B cell (primary cell): ENCODE measurements at regions of chr1 and their contacts with region 1.

Region 1: DNA sequence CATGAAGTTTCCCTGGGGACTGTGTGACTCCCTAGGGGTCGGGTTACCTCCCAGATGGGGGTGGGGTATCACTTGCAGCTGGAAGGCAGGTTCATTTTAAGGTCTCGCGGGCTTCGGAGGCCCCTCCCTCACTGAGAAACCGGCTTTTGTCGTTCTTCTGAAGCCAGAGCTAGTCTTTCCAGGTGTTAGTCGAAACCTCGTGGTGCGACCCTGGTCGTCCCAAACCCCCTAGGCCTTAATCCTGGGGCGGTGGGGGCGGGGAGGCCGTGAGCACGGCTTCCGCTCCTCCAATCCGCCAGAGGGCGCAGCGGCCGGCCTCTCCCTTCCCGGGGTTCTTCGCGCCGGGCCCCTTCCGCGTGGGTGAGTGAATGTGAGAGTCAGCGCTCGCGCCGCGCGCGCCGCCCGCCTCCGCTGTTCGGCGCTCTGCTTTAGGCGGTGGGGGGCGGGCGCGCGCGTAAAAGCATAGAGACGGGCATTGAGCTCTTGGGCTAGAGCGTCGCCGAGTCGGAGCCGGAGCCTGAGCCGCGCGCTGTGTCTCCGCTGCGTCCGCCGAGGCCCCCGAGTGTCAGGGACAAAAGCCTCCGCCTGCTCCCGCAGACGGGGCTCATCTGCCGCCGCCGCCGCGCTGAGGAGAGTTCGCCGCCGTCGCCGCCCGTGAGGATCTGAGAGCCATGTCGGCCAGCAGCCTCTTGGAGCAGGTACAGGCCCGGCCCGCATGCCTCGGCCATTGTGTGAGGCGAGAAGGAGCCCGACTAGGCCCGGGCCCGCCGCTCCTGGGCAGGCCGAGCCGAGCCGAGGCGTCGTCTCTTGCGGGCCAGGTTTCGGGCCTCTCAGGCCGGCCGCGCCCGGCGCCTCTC is at the start of gene YTHDF2:
- DNase-seq: peak; percentile 99
- ATAC-seq: peak; percentile 91
- H3K4me3 ChIP-seq: peak within 1 kb of the TSS; percentile 75 to 91 (median 84)
- H3K4me3 Mint-ChIP-seq: peak within 1 kb of the TSS; percentile 95
- H3K27ac ChIP-seq: peak within 1 kb of the TSS; percentile 92 to 94
- H3K27ac Mint-ChIP-seq: peak within 1 kb of the TSS; percentile 95
- H3K4me1 ChIP-seq: peaks cover 16 to 23% of the 10 kb centered on the region in 2 donors
- H3K4me1 Mint-ChIP-seq: peaks cover 39% of the 10 kb centered on the region
- H3K27me3 ChIP-seq: no peaks in the 10 kb centered on the region
- H3K27me3 Mint-ChIP-seq: no peaks in the 10 kb centered on the region
- CTCF ChIP-seq: peak; percentile 91
- total RNA-seq, gene YTHDF2: 58.8 and 73.0 TPM in 2 replicates

Region 2: DNA sequence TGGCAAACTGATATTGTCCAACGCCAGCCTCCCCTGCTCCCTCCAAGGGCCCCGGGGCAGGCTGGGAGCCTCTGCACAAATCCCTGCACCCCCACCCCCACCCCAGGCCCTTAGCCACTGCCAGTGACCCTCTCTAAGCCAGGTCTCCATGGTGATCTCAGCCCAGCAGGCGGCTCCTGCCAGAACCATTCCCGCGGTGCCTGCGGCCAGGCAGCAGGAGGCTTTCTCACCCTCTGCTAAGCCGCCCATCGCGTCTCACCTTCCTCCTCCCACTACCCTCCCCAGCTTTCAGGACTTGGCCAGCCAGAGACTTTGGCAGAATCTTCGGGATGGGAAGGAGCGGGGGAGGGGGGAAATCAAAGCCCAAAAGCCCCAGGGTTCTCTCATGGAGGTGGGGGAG is 1199.9 kb before region 1 on chr1:
- CTCF ChIA-PET with region 1: no interaction called
- POLR2A ChIA-PET with region 1: no interaction called
- intact Hi-C with region 1: no loop called
- DNase-seq: no peak
- ATAC-seq: no peak
- H3K4me3 ChIP-seq: no peak overlapping the region
- H3K4me3 Mint-ChIP-seq: no peak overlapping the region
- H3K27ac ChIP-seq: no peak overlapping the region
- H3K27ac Mint-ChIP-seq: no peak overlapping the region
- H3K4me1 ChIP-seq: no peaks in the 10 kb centered on the region
- H3K4me1 Mint-ChIP-seq: no peaks in the 10 kb centered on the region
- H3K27me3 ChIP-seq: no peaks in the 10 kb centered on the region
- H3K27me3 Mint-ChIP-seq: no peaks in the 10 kb centered on the region
- CTCF ChIP-seq: no peak

Region 3: DNA sequence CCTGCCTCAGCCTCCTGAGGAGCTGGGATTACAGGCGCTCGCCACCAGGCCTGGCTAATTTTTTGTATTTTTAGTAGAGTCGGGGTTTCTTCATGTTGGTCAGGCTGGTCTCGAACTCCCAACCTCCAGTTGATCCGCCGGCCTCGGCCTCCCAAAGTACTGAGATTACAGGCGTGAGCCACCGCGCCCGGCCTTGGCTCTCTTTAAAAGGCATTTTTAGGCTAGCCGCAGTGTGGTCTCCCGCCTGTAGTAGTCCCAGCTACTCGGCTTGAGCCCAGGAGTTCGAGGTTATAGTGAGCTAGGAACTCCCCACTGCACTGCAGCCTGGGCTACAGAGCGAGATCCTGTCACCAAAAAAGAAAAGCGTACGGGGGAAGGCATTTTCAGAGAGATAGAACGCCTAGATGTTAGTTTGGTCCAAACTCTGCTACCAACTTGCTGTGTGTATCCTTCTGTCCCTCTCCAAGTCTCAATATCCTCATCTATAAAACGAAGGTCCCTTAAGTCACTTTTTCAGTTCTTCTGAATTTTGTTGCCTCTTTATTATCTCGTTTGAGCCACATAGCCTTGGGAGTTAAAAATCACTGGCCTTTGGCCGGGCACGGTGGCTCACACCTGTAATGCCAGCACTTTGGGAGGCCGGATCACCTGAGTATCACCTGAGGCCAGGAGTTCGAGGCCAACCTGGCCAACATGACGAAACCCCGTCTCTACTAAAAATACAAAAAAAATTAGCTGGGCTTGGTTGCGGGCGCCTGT is 407.1 kb before region 1 on chr1:
- CTCF ChIA-PET with region 1: no interaction called
- POLR2A ChIA-PET with region 1: interaction called, 5 read pairs
- intact Hi-C with region 1: loop called (anchors 5 kb)
- DNase-seq: peak; percentile 67
- ATAC-seq: no peak
- H3K4me3 ChIP-seq: peak overlapping the region; percentile 72 to 93 (median 80)
- H3K4me3 Mint-ChIP-seq: peak overlapping the region; percentile 91
- H3K27ac ChIP-seq: peak overlapping the region; percentile 91 to 99
- H3K27ac Mint-ChIP-seq: peak overlapping the region; percentile 99
- H3K4me1 ChIP-seq: peaks cover 34 to 41% of the 10 kb centered on the region in 2 donors
- H3K4me1 Mint-ChIP-seq: peaks cover 45% of the 10 kb centered on the region
- H3K27me3 ChIP-seq: no peaks in the 10 kb centered on the region
- H3K27me3 Mint-ChIP-seq: no peaks in the 10 kb centered on the region
- CTCF ChIP-seq: no peak

Region 4: DNA sequence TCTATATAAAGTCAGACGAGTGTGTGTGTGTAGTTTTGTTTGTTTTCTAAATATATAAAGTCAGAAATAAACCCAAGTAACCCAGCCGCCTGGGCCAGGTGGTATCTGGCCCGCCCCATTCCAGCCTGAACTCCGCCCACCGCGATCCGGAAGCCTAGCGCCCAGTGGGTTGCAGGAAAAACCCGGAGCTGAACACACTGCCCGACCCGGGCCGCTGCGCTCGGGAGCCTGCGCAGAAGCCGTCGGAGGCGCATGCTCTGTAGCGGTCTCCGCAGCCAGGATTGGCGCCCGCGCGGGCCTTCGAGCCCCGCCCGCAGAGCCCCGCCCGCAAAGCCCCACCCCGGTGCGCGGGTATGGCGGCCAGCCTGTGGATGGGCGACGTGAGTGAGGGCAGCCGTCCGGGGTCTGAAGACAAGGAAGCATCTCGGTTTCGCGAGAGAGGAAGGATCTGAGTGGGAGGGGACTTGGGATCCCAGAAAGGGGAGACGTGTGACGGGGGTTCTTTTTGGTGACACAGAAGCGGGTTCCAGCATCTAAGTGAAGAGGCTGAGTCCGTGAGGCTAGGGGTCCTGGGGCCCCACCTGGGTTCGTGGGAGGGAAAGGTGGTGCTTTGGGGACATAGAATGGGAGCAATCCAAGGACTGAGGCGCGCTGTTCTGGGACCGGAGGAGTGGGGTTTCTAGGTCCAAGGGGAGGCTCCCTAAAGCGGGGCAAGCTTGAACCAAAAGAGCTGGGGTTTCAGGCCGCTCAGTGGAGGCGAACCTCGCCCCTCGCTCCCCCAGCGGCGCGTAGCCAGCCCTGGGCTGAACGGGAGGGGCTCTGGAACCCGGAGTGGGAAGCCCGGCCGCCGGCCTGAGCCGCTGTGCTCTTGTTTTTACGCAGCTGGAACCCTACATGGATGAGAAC is 183.7 kb before region 1 on chr1 and contains the start of gene TRNAU1AP:
- CTCF ChIA-PET with region 1: interaction called, 6 read pairs
- POLR2A ChIA-PET with region 1: interaction called, 4 read pairs
- intact Hi-C with region 1: loop called (anchors 1 kb)
- DNase-seq: peak; percentile 98
- ATAC-seq: peak; percentile 94
- H3K4me3 ChIP-seq: peak within 1 kb of the TSS; percentile 77 to 97 (median 90)
- H3K4me3 Mint-ChIP-seq: peak within 1 kb of the TSS; percentile 100
- H3K27ac ChIP-seq: peak within 1 kb of the TSS; percentile 82 to 86
- H3K27ac Mint-ChIP-seq: peak within 1 kb of the TSS; percentile 99
- H3K4me1 ChIP-seq: peaks cover 5 to 17% of the 10 kb centered on the region in 2 donors
- H3K4me1 Mint-ChIP-seq: peaks cover 18% of the 10 kb centered on the region
- H3K27me3 ChIP-seq: no peaks in the 10 kb centered on the region
- H3K27me3 Mint-ChIP-seq: no peaks in the 10 kb centered on the region
- CTCF ChIP-seq: no peak
- total RNA-seq, gene TRNAU1AP: 45.2 and 48.5 TPM in 2 replicates

Region 5: GRCh38 chr1:28648474-28649198 is 88.0 kb before region 1 on chr1 and contains the start of gene RNU11:
- CTCF ChIA-PET with region 1: interaction called, 46 read pairs
- POLR2A ChIA-PET with region 1: interaction called, 54 read pairs
- intact Hi-C with region 1: loop called (anchors 1 kb)
- DNase-seq: peak; percentile 98
- ATAC-seq: peak; percentile 72
- H3K4me3 ChIP-seq: peak within 1 kb of the TSS; percentile 9 to 60 (median 53)
- H3K4me3 Mint-ChIP-seq: peak within 1 kb of the TSS; percentile 94
- H3K27ac ChIP-seq: peak within 1 kb of the TSS; percentile 93 to 100
- H3K27ac Mint-ChIP-seq: peak within 1 kb of the TSS; percentile 100
- H3K4me1 ChIP-seq: peaks cover 25 to 33% of the 10 kb centered on the region in 2 donors
- H3K4me1 Mint-ChIP-seq: peaks cover 32% of the 10 kb centered on the region
- H3K27me3 ChIP-seq: no peaks in the 10 kb centered on the region
- H3K27me3 Mint-ChIP-seq: no peaks in the 10 kb centered on the region
- CTCF ChIP-seq: no peak
- total RNA-seq, gene RNU11: not detected in 2 replicates

Region 6: GRCh38 chr1:28792644-28793121 is 56.0 kb after region 1 on chr1:
- CTCF ChIA-PET with region 1: no interaction called
- POLR2A ChIA-PET with region 1: no interaction called
- intact Hi-C with region 1: loop called (anchors 5 kb)
- DNase-seq: no peak
- ATAC-seq: no peak
- H3K4me3 ChIP-seq: no peak overlapping the region
- H3K4me3 Mint-ChIP-seq: no peak overlapping the region
- H3K27ac ChIP-seq: no peak overlapping the region
- H3K27ac Mint-ChIP-seq: no peak overlapping the region
- H3K4me1 ChIP-seq: no peaks in the 10 kb centered on the region
- H3K4me1 Mint-ChIP-seq: no peaks in the 10 kb centered on the region
- H3K27me3 ChIP-seq: no peaks in the 10 kb centered on the region
- H3K27me3 Mint-ChIP-seq: peaks cover 17% of the 10 kb centered on the region
- CTCF ChIP-seq: no peak

Region 7: DNA sequence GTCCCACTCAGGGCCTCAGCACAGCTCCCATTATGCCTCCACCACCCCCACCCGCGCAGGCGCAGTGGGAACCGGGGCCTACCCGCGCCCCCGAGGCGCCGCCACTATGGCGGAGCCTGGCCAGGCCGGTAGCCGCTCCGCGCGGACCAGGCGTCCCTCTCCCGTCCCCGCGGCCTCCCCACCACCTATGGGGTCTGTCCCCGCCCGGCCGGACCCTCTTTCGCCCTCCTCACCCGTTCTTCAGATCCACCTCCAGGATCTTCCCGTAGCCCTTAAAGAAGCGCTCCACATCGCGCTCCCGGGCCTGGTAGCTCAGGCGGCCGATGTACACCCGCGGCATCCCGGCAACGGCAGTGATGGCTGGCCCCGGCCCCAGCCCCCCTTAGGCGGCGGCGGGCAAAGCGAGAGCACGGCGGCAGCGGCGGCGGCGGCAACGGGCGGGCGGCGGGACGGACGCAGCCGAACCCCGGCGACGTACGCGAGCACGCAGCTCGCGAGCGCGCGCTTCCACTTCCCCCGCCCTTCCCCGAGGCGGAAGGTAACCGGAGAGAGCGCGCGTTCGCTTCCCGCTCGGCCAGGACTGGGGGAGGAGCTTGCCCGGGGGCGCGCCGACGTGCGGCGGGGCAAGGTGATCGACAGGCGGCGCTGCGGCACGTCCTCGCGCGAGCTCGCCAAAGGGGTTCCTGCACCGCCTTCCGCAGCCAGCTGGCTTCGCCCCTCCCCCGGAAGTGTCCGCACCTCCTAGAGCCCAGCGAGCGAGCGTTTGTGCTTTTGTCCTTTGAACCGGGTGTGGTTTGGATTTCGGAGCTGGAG is 444.9 kb after region 1 on chr1 and contains the start of gene SRSF4:
- CTCF ChIA-PET with region 1: interaction called, 14 read pairs
- POLR2A ChIA-PET with region 1: interaction called, 14 read pairs
- intact Hi-C with region 1: loop called (anchors 1 kb)
- DNase-seq: peak; percentile 99
- ATAC-seq: peak; percentile 93
- H3K4me3 ChIP-seq: peak within 1 kb of the TSS; percentile 85 to 100 (median 95)
- H3K4me3 Mint-ChIP-seq: peak within 1 kb of the TSS; percentile 94
- H3K27ac ChIP-seq: peak within 1 kb of the TSS; percentile 99
- H3K27ac Mint-ChIP-seq: peak within 1 kb of the TSS; percentile 95
- H3K4me1 ChIP-seq: peaks cover 32 to 42% of the 10 kb centered on the region in 2 donors
- H3K4me1 Mint-ChIP-seq: peaks cover 42% of the 10 kb centered on the region
- H3K27me3 ChIP-seq: no peaks in the 10 kb centered on the region
- H3K27me3 Mint-ChIP-seq: no peaks in the 10 kb centered on the region
- CTCF ChIP-seq: peak; percentile 79
- total RNA-seq, gene SRSF4: 93.5 and 100 TPM in 2 replicates